ENCODE measurements at regions of chr11 and their contacts with region 1.

Region 1: GRCh38 chr11:64304316-64305072 is 830 bp upstream of the ESRRA start:
- DNase-seq: peak; percentile 23
- H3K4me3 ChIP-seq: peak overlapping the region; percentile 66
- H3K27me3 ChIP-seq: peaks cover 8% of the 10 kb centered on the region; the same call in 1 of the 2 replicates
- CTCF ChIP-seq: peak; percentile 89

Region 2: DNA sequence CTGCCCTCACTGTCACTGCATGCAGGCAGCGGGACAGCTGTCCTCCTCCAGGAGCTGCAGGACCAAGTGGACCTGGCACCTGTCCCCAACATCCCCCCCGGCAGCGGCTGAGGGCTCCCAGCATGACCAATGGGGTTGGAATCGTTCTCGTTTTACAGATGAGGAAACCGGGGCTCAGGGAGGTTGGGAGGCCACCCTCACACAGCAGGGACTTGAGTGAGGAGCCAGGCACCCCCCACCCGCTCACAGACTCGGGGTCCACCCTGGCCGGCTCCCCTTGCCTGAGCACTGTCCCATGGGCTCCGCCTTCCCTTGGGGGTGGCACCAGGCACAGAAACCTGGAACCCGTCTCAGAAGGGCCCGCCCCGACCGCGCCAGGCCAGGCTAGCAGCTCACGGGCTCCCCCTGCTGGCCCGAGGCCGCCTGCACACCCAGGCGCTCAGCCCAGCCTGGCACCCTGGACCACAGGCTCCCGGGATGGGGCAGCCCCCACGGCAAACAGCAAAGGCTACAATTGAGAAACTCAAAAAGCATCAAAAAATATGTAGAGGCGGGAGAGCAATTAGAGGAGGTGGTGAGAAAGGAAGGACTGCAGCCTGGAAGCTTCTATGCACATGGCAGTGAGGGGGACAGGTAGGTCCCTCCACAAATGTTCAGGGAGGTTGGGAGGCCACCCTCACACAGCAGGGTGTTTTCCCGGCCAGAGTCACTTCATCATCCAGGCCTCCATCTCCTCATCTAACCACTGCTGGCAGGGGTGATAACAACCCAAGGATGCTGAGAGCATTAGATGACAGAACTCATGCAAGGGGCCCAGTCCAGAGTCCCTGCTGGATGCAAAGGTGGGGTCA is 151.4 kb before region 1 on chr11:
- CTCF ChIA-PET with region 1: no interaction called
- POLR2A ChIA-PET with region 1: no interaction called
- DNase-seq: no peak
- H3K4me3 ChIP-seq: no peak overlapping the region
- H3K27me3 ChIP-seq: no peaks in the 10 kb centered on the region
- CTCF ChIP-seq: peak; percentile 96

Region 3: DNA sequence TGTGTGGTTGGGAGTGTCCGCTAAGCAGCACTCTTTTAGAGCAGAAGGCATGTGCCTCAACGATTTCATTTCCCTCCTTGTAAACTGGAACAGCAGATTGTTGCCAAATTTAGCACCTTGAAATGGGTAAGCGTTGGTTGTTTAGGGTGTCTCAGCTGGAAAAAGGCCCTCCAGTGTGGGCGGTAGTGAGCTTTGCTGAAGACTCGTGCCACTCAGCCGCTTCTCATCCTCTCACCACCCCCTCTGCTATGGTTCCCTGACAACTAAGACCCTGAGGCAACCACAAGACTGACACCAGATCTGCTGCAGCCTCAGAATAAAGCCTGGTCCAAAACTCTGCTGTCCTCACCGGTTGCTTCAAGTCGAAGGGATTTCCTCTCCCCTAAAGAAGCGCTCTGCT is 107.9 kb before region 1 on chr11:
- CTCF ChIA-PET with region 1: interaction called, 229 read pairs
- POLR2A ChIA-PET with region 1: no interaction called
- DNase-seq: no peak
- H3K4me3 ChIP-seq: no peak overlapping the region
- H3K27me3 ChIP-seq: no peaks in the 10 kb centered on the region
- CTCF ChIP-seq: no peak

Region 4: DNA sequence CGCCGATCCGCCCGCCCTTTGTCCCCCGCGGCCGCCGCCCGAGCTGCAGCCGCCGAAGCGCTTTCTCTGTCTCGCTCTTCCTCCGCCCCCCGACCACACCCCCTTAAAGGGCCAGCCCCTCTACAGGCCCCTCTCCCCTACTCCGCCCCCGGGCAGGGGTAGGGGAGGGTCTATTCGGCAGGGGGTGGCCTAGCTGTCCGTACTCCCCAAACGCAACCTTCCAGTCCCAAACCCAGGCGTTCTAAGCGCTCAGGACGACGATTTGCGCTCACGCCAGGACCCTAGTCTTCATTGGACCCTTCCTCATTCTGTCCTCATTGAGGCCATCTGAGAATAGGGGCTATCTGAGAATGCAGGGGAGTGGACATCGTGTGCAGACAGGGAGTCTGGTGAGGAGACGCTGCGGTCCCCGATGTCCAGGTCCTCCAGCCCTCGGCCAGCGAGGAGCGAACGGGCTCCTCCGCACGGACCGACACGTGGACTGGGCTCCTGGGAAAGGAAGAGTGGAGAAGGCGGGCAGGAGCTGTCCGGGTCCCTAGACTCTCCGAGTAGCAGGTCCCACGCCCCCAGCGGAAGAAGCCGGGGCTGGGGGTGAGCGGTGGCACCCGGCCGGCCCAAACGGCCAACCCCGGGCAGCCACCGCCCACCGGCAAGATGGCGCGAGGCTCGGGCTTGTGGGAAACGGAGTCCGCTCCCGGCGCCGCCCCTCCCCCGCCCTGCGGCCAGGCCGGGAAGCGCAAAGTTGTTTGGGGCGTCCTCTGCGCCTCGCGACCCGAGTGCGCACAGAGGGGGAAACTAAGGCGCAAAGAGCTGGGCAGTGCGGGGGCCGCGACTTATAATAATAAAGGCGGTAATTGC is 57.4 kb before region 1 on chr11 and contains the start of gene PPP1R14B:
- CTCF ChIA-PET with region 1: interaction called, 92 read pairs
- POLR2A ChIA-PET with region 1: no interaction called
- DNase-seq: no peak
- H3K4me3 ChIP-seq: peak within 1 kb of the TSS; percentile 94
- H3K27me3 ChIP-seq: no peaks in the 10 kb centered on the region
- CTCF ChIP-seq: no peak
- polyA plus RNA-seq, gene PPP1R14B: 174 and 283 TPM in 2 replicates

Region 5: DNA sequence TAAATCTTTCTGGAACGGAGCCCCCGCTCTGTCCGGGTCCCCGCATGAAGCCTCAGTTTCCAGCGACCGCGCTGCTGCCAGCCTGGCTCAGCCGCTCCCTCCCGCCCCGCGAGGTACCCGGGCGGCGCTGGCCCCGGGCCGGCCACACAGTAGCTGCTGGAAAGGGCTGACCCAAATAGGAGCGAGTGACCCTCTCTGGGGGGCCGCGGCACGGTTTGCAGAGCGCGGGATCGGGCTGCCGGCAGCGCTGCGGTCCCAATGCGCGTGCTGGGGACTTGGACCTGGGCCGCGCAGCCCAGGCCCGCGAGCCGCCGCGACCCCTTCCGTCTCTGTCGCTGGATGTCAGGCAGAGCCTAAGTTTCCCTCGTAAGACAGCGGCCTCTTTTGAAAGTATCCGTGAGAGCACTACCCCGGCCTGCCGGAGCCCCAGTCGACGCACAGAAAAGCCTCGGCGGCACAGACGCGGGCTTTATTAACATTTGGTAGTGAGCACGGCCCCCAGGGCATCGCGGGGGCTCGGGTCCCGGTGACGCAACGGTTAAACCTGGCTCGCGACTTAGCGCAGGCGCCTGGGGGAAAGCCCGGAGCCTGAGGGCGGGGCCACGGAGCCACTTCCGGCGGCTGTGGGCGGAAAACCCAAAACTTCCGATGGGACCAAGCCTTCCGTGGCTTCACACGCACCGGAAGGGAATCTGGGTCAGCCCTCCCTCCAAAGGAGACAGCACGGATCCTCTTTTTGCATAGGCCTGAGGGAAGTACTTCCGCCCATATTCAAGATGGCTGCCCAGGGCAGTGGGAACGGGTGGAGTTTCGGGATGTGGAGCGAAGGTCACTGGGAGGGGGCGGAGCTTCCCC is 34.9 kb before region 1 on chr11:
- CTCF ChIA-PET with region 1: interaction called, 41 read pairs
- POLR2A ChIA-PET with region 1: no interaction called
- DNase-seq: peak; percentile 99
- H3K4me3 ChIP-seq: peak overlapping the region; percentile 66
- H3K27me3 ChIP-seq: no peaks in the 10 kb centered on the region
- CTCF ChIP-seq: no peak

Region 6: DNA sequence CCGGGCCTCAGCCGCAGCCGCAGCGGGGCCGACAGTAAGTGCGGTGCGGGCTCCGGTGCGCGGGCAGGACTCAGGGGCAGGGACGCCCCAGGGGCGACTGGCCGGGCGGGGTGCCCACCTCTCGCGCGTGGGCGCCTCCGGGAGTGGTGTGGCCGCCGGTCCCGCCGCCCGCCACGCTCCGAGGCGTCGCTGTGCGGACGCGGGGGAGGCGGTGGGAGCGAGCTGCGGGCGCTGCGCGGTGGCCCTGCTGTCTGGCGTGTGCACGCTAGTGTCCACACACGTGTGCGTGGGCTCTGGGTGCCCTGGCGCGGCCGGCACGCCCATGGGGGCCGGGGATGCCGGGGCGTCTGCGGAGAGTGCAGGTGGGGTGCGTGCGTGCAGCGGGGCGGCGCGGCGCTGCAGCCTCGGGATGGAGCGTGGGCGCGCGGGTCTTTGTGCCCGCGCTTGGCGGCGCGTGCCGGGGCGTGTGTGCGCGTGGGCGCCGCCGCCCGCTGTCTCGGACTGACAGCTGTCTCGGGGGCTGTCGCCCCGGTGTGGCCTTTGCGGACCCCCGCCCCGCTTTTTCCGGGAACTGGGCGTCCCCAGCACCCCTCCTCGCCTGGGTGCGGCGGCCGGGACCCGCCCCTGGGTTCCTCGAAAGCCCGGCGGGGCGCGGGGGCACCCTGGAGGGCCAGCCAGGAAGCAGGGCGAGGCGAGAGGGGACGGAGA is 12.6 kb before region 1 on chr11:
- CTCF ChIA-PET with region 1: interaction called, 88 read pairs
- POLR2A ChIA-PET with region 1: no interaction called
- DNase-seq: no peak
- H3K4me3 ChIP-seq: peak overlapping the region; percentile 20
- H3K27me3 ChIP-seq: peaks cover 36% of the 10 kb centered on the region
- CTCF ChIP-seq: no peak

Region 7: DNA sequence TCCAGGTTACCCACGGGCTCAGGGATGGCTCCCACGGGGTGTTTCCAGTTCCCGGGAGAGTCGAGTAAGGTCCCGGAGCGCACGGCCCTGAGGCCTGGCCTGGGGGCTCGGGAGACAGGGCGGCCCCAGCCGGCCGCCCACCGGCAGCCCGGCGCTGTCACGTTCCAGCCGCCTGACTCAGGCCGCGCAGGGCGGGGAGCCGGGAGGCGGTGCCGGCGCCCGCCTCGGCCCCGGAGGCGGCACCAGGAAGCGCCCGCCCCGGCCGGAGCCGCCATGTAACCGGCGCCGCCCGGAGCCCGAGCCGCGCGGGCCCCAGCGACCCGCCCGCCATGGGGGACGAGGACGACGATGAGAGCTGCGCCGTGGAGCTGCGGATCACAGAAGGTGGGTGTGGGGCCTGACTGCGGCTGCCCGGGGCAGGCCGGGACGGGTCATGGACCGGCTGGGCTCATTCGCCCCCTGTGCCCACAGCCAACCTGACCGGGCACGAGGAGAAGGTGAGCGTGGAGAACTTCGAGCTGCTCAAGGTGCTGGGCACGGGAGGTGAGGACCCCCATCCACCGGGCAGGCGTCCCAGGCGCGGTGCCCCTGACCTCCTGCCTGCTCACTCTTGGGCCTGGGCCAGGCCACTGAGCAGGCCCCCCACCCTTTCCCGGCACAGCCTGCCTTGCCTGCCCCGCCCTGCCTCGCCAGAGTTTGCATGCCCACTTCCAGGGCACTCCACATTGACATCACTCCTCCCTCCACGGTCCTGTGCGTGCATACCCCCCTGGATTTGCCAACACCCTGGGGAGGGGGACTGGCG is 54.6 kb after region 1 on chr11 and contains the start of gene RPS6KA4:
- CTCF ChIA-PET with region 1: interaction called, 22 read pairs
- POLR2A ChIA-PET with region 1: interaction called, 3 read pairs
- DNase-seq: no peak
- H3K4me3 ChIP-seq: peak within 1 kb of the TSS; percentile 89
- H3K27me3 ChIP-seq: no peaks in the 10 kb centered on the region
- CTCF ChIP-seq: no peak
- polyA plus RNA-seq, gene RPS6KA4: 22.9 and 33.8 TPM in 2 replicates

Measured in BJ (cell line).